ENCODE measurements at regions of chr1 and their contacts with region 1.

Region 1: GRCh38 chr1:56821140-56821797 is 2.1 kb upstream of the FYB2 start:
- DNase-seq: peak in 1 of 2 experiments; percentile 81
- H3K4me3 ChIP-seq: no peak overlapping the region
- H3K27ac ChIP-seq: no peak overlapping the region
- H3K4me1 ChIP-seq: peaks cover 11% of the 10 kb centered on the region; the same call in 1 of the 2 replicates
- H3K27me3 ChIP-seq: no peaks in the 10 kb centered on the region
- CTCF ChIP-seq: peak; percentile 96

Region 2: DNA sequence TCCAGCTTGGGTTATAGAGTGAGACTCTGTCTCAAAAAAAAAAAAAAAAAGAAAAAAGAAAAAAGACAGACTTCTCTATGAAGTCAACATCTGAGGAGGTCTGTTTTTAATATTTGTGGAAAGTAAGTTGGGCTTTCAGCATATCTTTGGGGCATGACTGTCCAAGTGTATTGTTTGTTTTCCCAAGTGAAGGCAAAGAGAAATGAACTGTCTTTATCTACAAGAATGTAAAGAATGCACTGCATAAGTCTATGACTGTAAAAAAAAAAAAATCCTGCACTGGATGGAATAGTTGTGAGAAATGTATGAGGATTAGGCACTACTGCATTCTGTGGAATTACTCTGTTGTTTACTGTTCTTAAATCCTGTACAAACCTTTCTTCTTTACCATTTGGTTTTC is 1886.4 kb before region 1 on chr1:
- CTCF ChIA-PET with region 1: no interaction called
- POLR2A ChIA-PET with region 1: no interaction called
- intact Hi-C with region 1: no loop called
- DNase-seq: peak in 1 of 2 experiments; percentile 92
- H3K4me3 ChIP-seq: no peak overlapping the region
- H3K27ac ChIP-seq: peak overlapping the region; percentile 81
- H3K4me1 ChIP-seq: peaks cover 11% of the 10 kb centered on the region
- H3K27me3 ChIP-seq: no peaks in the 10 kb centered on the region
- CTCF ChIP-seq: no peak

Region 3: DNA sequence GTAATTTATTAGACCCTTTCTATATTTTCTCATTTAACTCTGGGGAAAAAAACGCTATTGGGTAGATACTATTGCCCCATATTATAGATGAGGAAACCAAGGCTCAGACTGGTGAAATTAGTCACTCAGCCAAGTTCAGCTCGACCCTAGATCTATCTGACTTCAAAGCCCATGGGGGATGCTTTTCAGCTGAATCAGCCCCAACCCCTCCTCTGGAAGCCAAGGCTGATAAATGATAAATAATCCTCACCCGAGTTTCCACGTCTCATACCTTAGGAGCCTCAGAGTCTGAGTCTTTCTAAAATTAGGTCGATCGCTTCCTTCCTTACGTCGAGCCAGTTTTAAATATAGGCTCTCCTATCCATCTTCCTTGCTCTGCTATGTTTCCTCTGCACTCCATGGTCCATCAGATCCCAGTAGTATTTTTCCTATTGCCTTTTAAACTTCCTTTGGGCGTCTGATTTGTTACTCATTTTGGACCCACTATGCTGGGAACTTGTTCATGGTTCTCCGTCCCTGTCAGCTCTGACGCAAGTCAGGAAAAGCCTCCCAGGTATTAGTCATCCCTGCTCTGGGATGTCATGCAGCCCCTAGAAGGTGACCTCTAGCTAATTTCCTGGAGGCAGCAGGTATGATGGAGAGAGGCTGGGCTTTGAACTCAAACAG is 364.7 kb before region 1 on chr1:
- CTCF ChIA-PET with region 1: no interaction called
- POLR2A ChIA-PET with region 1: interaction called, 18 read pairs
- intact Hi-C with region 1: no loop called
- DNase-seq: peak in 1 of 2 experiments; percentile 73
- H3K4me3 ChIP-seq: no peak overlapping the region
- H3K27ac ChIP-seq: peak overlapping the region; percentile 40
- H3K4me1 ChIP-seq: peaks cover 21% of the 10 kb centered on the region
- H3K27me3 ChIP-seq: no peaks in the 10 kb centered on the region
- CTCF ChIP-seq: no peak

Region 4: GRCh38 chr1:56709269-56709880 is 111.9 kb before region 1 on chr1:
- CTCF ChIA-PET with region 1: interaction called, 7 read pairs
- POLR2A ChIA-PET with region 1: no interaction called
- intact Hi-C with region 1: loop called (anchors 2 kb)
- DNase-seq: peak in 1 of 2 experiments; percentile 49
- H3K4me3 ChIP-seq: no peak overlapping the region
- H3K27ac ChIP-seq: no peak overlapping the region
- H3K4me1 ChIP-seq: peaks cover 17% of the 10 kb centered on the region
- H3K27me3 ChIP-seq: no peaks in the 10 kb centered on the region
- CTCF ChIP-seq: peak; percentile 80

Region 5: DNA sequence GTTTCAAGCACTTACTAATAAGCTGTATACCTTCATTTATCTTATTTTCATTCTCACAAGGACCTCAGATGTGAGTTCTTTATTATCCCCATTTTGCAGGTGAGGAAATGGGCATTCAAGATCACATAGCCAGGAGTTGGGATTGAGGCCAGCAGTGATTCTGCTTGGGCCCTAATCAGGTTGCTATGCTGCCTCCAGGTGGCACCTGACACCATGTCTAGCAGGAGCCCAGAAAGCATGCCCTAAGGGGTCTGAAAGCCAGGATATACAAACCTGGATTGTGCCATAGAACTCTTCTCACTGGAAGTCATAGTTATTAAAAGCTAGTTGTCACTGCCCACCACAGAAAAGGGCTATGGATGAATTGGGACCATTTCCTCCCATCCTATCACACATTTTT is 63.1 kb before region 1 on chr1:
- CTCF ChIA-PET with region 1: no interaction called
- POLR2A ChIA-PET with region 1: no interaction called
- intact Hi-C with region 1: loop called (anchors 1 kb)
- DNase-seq: peak; percentile 23 to 48
- H3K4me3 ChIP-seq: no peak overlapping the region
- H3K27ac ChIP-seq: no peak overlapping the region
- H3K4me1 ChIP-seq: peaks cover 8% of the 10 kb centered on the region; the same call in 1 of the 2 replicates
- H3K27me3 ChIP-seq: no peaks in the 10 kb centered on the region
- CTCF ChIP-seq: peak; percentile 46; the same call in 1 of the 2 replicates

Region 6: GRCh38 chr1:56866656-56867055 is 45.4 kb after region 1 on chr1:
- CTCF ChIA-PET with region 1: no interaction called
- POLR2A ChIA-PET with region 1: no interaction called
- intact Hi-C with region 1: no loop called
- DNase-seq: no peak
- H3K4me3 ChIP-seq: no peak overlapping the region
- H3K27ac ChIP-seq: no peak overlapping the region
- H3K4me1 ChIP-seq: no peaks in the 10 kb centered on the region
- H3K27me3 ChIP-seq: peaks cover 32% of the 10 kb centered on the region
- CTCF ChIP-seq: no peak